H1 (cell line): ENCODE measurements at regions of chr10 and their contacts with region 1.

Region 1: GRCh38 chr10:47354162-47354561 is 6.0 kb downstream of the RBP3 start:
- DNase-seq: no peak
- H3K4me3 ChIP-seq: no peak overlapping the region
- H3K27ac ChIP-seq: no peak overlapping the region
- H3K4me1 ChIP-seq: no peaks in the 10 kb centered on the region; a peak in 1 of 7 replicates
- H3K27me3 ChIP-seq: no peaks in the 10 kb centered on the region; a peak in 1 of 7 replicates
- CTCF ChIP-seq: peak in 2 of 3 experiments; percentile 15 to 20; a peak in 2 of 4 replicates
- EP300 ChIP-seq: no peak
- POLR2A ChIP-seq: no peak
- RAD21 ChIP-seq: peak in 1 of 2 experiments; percentile 31; a peak in 2 of 4 replicates

Region 2: GRCh38 chr10:47340608-47341170 is 13.5 kb before region 1 on chr10:
- CTCF ChIA-PET with region 1: interaction called, 132 read pairs
- POLR2A ChIA-PET with region 1: no interaction called
- DNase-seq: peak; percentile 51 to 95
- H3K4me3 ChIP-seq: no peak overlapping the region
- H3K27ac ChIP-seq: no peak overlapping the region
- H3K4me1 ChIP-seq: peaks cover 0 to 3% (median under 1%) of the 10 kb centered on the region in 4 experiments; a peak in 3 of 7 replicates
- H3K27me3 ChIP-seq: no peaks in the 10 kb centered on the region
- CTCF ChIP-seq: peak; percentile 77 to 98 (median 96)
- EP300 ChIP-seq: no peak
- POLR2A ChIP-seq: no peak
- RAD21 ChIP-seq: peak; percentile 73 to 79

Region 3: GRCh38 chr10:47402641-47403301 is 48.6 kb after region 1 on chr10:
- CTCF ChIA-PET with region 1: interaction called, 25 read pairs
- POLR2A ChIA-PET with region 1: no interaction called
- DNase-seq: peak; percentile 51 to 68
- H3K4me3 ChIP-seq: no peak overlapping the region
- H3K27ac ChIP-seq: 0 out of 2 replicates have a peak overlapping the region, but pooled peaks have one; percentile 32
- H3K4me1 ChIP-seq: peaks cover 7 to 27% (median 20%) of the 10 kb centered on the region in 4 experiments
- H3K27me3 ChIP-seq: no peaks in the 10 kb centered on the region; a peak in 1 of 7 replicates
- CTCF ChIP-seq: no peak
- EP300 ChIP-seq: no peak
- POLR2A ChIP-seq: no peak
- RAD21 ChIP-seq: no peak